Heart right ventricle (tissue), 16 donors: ENCODE measurements at regions of chr7 and their contacts with region 1.

Region 1: GRCh38 chr7:150567169-150567568 is at the start of gene GIMAP4:
- DNase-seq: peak in 1 of 2 donors; percentile 51
- ATAC-seq: peak; percentile 64 to 90 (median 82)
- H3K4me3 ChIP-seq: peak within 1 kb of the TSS; percentile 37 to 72 (median 60)
- H3K27ac ChIP-seq: peak within 1 kb of the TSS; percentile 55 to 97 (median 89)
- H3K4me1 ChIP-seq: peaks cover 0 to 33% (median 11%) of the 10 kb centered on the region in 9 donors
- H3K27me3 ChIP-seq: no peaks in the 10 kb centered on the region
- CTCF ChIP-seq: no peak
- total RNA-seq, gene GIMAP4: 19.7 to 68.6 (median 31.0) TPM

Region 2: GRCh38 chr7:150481186-150481920 is 85.8 kb before region 1 on chr7:
- intact Hi-C with region 1: loop called in 2 of 10 experiments (anchors 5 to 10 kb)
- DNase-seq: no peak
- ATAC-seq: peak in 4 of 8 donors; percentile 15 to 31 (median 30)
- H3K4me3 ChIP-seq: peak overlapping the region in 1 of 10 donors; percentile 2
- H3K27ac ChIP-seq: peak overlapping the region in 9 of 10 donors; percentile 34 to 93 (median 63)
- H3K4me1 ChIP-seq: peaks cover 0 to 87% (median 68%) of the 10 kb centered on the region in 9 donors
- H3K27me3 ChIP-seq: no peaks in the 10 kb centered on the region
- CTCF ChIP-seq: no peak

Region 3: GRCh38 chr7:150514748-150515222 is 52.4 kb before region 1 on chr7 and contains the start of gene GIMAP7:
- intact Hi-C with region 1: loop called in 2 of 10 experiments (anchors 5 kb)
- DNase-seq: peak in 1 of 2 donors; percentile 38
- ATAC-seq: peak; percentile 54 to 83 (median 80)
- H3K4me3 ChIP-seq: peak within 1 kb of the TSS; percentile 32 to 68 (median 56)
- H3K27ac ChIP-seq: peak within 1 kb of the TSS; percentile 60 to 95 (median 80)
- H3K4me1 ChIP-seq: peaks cover 0 to 25% (median 3%) of the 10 kb centered on the region in 9 donors
- H3K27me3 ChIP-seq: no peaks in the 10 kb centered on the region
- CTCF ChIP-seq: no peak
- total RNA-seq, gene GIMAP7: 7.5 to 41.2 (median 19.6) TPM

Region 4: GRCh38 chr7:150520145-150520544 is 47.0 kb before region 1 on chr7:
- intact Hi-C with region 1: loop called in 3 of 10 experiments (anchors 5 kb)
- DNase-seq: no peak
- ATAC-seq: peak in 2 of 8 donors; percentile 47 to 52
- H3K4me3 ChIP-seq: peak overlapping the region in 9 of 10 donors; percentile 9 to 68 (median 57)
- H3K27ac ChIP-seq: peak overlapping the region; percentile 27 to 95 (median 80)
- H3K4me1 ChIP-seq: peaks cover 0 to 10% (median 0%) of the 10 kb centered on the region in 9 donors
- H3K27me3 ChIP-seq: no peaks in the 10 kb centered on the region
- CTCF ChIP-seq: no peak

Region 5: DNA sequence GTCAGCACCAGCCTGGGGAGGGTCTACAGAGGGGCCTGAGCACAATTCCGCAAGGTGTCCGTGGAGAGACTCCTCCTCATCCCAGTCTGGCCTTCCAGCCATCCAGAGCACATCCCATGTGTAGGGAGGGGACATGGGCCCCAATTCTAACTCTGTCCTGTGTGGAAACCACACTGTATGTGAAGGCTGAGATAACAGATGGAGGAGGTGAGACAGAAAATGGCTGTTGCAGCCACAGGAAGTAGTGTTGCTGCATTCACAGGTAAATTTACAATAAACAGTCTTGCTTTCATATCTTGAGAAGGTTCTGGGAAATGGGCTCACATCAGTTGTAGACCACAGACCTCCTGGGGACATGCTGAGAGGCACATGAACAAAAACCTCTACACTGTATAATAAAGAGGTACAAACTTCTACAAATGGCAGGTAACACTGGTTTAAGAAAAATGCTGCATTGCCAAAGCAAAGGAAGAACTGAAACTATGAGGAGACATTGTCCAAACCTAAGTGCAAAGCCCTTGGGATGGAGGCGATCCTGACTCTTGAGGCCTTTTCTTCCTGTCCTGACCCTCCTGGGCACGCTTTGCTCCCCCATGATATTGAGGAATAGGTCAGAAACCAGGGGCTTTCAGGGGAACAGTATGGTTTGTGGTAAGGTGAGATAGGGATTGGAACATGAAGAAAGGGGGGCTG is 96.8 kb after region 1 on chr7:
- intact Hi-C with region 1: no loop called
- DNase-seq: no peak
- ATAC-seq: no peak
- H3K4me3 ChIP-seq: no peak overlapping the region
- H3K27ac ChIP-seq: peak overlapping the region in 1 of 10 donors; percentile 78
- H3K4me1 ChIP-seq: peaks cover 0 to 47% (median 0%) of the 10 kb centered on the region in 9 donors
- H3K27me3 ChIP-seq: no peaks in the 10 kb centered on the region
- CTCF ChIP-seq: no peak

Region 6: GRCh38 chr7:150716368-150716767 is 149.2 kb after region 1 on chr7 and contains the start of gene GIMAP1:
- intact Hi-C with region 1: loop called in 1 of 10 experiments (anchors 10 kb)
- DNase-seq: peak; percentile 36 to 78
- ATAC-seq: peak; percentile 79 to 95 (median 91)
- H3K4me3 ChIP-seq: peak within 1 kb of the TSS; percentile 30 to 71 (median 60)
- H3K27ac ChIP-seq: peak within 1 kb of the TSS; percentile 81 to 94 (median 88)
- H3K4me1 ChIP-seq: peaks cover 0 to 51% (median 8%) of the 10 kb centered on the region in 9 donors
- H3K27me3 ChIP-seq: no peaks in the 10 kb centered on the region
- CTCF ChIP-seq: no peak
- total RNA-seq, gene GIMAP1: 2.4 to 11.2 (median 4.3) TPM

Region 7: DNA sequence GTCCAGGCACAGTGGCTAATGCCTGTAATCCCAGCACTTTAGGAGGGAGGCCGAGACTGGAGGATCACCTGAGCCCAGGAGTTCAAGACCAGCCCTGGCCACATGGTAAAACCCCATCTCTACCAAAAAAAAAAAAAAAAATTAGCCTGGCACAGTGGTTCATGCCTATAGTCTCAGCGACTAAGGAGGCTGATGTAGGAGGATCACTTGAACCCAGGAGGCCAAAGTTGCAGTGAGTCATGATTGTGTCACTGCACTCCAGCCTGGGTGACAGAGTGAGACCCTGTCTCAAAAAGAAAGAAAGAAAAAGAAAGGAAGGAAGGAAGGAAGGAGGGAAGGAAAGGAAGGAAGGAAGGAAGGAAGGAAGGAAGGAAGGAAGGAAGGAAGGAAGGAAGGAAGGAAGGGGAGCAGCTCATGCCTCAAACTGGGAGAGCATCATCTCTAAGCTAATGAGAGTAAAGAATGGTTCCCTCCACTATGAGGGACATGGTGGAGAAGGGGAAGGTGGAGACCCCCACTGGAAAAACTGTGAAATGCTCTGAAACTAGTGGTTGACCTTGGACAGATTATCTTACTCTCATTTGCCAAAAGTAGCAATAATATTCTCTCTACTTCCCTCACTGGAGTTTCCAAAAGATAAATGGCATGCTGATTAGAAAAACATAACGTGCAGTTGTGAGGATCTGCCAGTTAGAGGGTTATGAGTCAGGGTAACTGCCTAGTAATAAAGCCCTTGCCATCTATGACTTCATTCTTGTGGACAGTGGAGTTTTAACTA is 186.8 kb after region 1 on chr7:
- intact Hi-C with region 1: loop called in 1 of 10 experiments (anchors 10 kb)
- DNase-seq: peak in 1 of 2 donors; percentile 43
- ATAC-seq: peak; percentile 36 to 67 (median 54)
- H3K4me3 ChIP-seq: no peak overlapping the region
- H3K27ac ChIP-seq: peak overlapping the region in 9 of 10 donors; percentile 25 to 87 (median 83)
- H3K4me1 ChIP-seq: peaks cover 20 to 68% (median 51%) of the 10 kb centered on the region in 9 donors
- H3K27me3 ChIP-seq: no peaks in the 10 kb centered on the region
- CTCF ChIP-seq: peak in 7 of 9 donors; percentile 8 to 62 (median 50)